CD8-positive, alpha-beta T cell (primary cell): ENCODE measurements at regions of chr9 and their contacts with region 1.

Region 1: DNA sequence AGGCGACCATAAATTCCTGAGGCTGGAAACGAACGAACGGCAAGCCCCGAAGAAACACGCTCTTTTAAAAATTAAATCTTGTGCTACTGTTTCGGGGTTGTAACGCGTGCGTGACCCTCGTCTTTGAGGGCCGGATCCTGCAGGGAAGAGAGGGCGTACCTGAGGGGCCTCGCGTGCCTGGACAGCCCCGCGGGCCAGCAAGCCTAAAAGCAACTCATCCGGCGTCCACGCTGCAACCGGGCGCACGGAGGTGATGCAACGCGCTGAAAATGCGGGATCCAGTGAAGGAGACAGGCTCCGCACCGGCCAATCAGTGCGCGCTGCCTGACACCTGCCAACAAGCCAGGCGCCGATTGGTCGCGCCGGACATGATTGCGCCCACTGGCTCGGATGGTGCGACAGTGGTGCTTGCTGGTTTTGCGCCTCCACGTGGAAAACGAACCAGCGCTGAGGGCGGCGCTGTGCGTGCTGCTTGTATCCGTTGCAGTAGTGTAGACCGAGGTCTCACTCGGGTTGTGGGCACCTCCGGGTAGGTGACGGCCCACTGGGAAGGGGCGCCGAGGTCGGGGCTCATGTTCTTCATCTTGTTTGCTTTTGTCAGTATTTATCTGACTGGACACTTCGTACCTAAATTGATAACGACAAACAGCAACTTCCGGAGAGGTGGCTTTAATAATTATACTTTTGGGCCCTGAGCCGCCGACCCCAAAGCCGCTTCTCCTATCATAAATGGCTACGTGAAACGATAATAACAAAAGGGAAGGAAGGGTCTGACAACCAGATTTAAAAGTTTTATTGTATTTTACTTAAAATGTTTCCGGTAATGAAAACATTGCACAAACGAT is at the start of gene IARS1:
- DNase-seq: peak; percentile 97 to 100 (median 100)
- ATAC-seq: peak; percentile 91
- H3K4me3 ChIP-seq: peak within 1 kb of the TSS; percentile 79 to 88
- H3K4me3 Mint-ChIP-seq: peak within 1 kb of the TSS; percentile 99
- H3K27ac ChIP-seq: peak within 1 kb of the TSS; percentile 78 to 90
- H3K27ac Mint-ChIP-seq: peak within 1 kb of the TSS; percentile 98
- H3K4me1 ChIP-seq: peaks cover 25% of the 10 kb centered on the region
- H3K4me1 Mint-ChIP-seq: peaks cover 46% of the 10 kb centered on the region
- H3K27me3 ChIP-seq: no peaks in the 10 kb centered on the region
- H3K27me3 Mint-ChIP-seq: no peaks in the 10 kb centered on the region
- CTCF ChIP-seq: peak; percentile 28
- total RNA-seq, gene IARS1: 64.2 to 66.2 TPM

Region 2: GRCh38 chr9:91378695-91379127 is 915.0 kb before region 1 on chr9:
- CTCF ChIA-PET with region 1: no interaction called
- POLR2A ChIA-PET with region 1: no interaction called
- intact Hi-C with region 1: no loop called
- DNase-seq: no peak
- ATAC-seq: no peak
- H3K4me3 ChIP-seq: no peak overlapping the region
- H3K4me3 Mint-ChIP-seq: no peak overlapping the region
- H3K27ac ChIP-seq: no peak overlapping the region
- H3K27ac Mint-ChIP-seq: no peak overlapping the region
- H3K4me1 ChIP-seq: no peaks in the 10 kb centered on the region
- H3K4me1 Mint-ChIP-seq: no peaks in the 10 kb centered on the region
- H3K27me3 ChIP-seq: no peaks in the 10 kb centered on the region
- H3K27me3 Mint-ChIP-seq: no peaks in the 10 kb centered on the region
- CTCF ChIP-seq: no peak

Region 3: GRCh38 chr9:92242260-92243136 is 51.2 kb before region 1 on chr9:
- CTCF ChIA-PET with region 1: no interaction called
- POLR2A ChIA-PET with region 1: no interaction called
- intact Hi-C with region 1: loop called in 1 of 2 experiments (anchors 10 kb)
- DNase-seq: no peak
- ATAC-seq: no peak
- H3K4me3 ChIP-seq: no peak overlapping the region
- H3K4me3 Mint-ChIP-seq: no peak overlapping the region
- H3K27ac ChIP-seq: no peak overlapping the region
- H3K27ac Mint-ChIP-seq: no peak overlapping the region
- H3K4me1 ChIP-seq: no peaks in the 10 kb centered on the region
- H3K4me1 Mint-ChIP-seq: no peaks in the 10 kb centered on the region
- H3K27me3 ChIP-seq: no peaks in the 10 kb centered on the region
- H3K27me3 Mint-ChIP-seq: no peaks in the 10 kb centered on the region
- CTCF ChIP-seq: no peak

Region 4: DNA sequence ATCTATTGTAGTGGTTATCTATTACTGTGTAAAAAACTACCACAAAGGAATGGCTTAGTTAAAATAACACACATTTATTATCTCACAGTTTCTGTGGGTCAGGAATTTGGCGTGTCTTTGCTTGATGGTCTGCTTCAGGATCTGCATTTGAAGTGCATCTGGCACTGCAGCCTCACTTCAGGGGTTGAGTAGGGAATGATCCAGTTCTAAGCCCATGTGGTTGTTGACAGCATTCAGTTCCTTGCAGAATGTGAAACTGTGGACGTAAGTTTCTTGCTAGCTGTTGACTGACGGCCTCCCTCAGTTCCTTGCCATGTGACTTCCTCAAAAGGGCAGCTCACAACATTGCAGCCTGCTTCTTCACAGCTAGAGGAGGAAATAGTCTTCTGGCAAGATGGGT is 112.8 kb after region 1 on chr9:
- CTCF ChIA-PET with region 1: no interaction called
- POLR2A ChIA-PET with region 1: no interaction called
- intact Hi-C with region 1: loop called in 1 of 2 experiments (anchors 5 kb)
- DNase-seq: peak in 8 of 9 experiments; percentile 14 to 72 (median 34)
- ATAC-seq: peak; percentile 90
- H3K4me3 ChIP-seq: peak overlapping the region; percentile 23 to 27
- H3K4me3 Mint-ChIP-seq: peak overlapping the region; percentile 72
- H3K27ac ChIP-seq: peak overlapping the region; percentile 2 to 57
- H3K27ac Mint-ChIP-seq: peak overlapping the region; percentile 85
- H3K4me1 ChIP-seq: peaks cover 24% of the 10 kb centered on the region
- H3K4me1 Mint-ChIP-seq: peaks cover 30% of the 10 kb centered on the region
- H3K27me3 ChIP-seq: no peaks in the 10 kb centered on the region
- H3K27me3 Mint-ChIP-seq: no peaks in the 10 kb centered on the region
- CTCF ChIP-seq: no peak

Region 5: DNA sequence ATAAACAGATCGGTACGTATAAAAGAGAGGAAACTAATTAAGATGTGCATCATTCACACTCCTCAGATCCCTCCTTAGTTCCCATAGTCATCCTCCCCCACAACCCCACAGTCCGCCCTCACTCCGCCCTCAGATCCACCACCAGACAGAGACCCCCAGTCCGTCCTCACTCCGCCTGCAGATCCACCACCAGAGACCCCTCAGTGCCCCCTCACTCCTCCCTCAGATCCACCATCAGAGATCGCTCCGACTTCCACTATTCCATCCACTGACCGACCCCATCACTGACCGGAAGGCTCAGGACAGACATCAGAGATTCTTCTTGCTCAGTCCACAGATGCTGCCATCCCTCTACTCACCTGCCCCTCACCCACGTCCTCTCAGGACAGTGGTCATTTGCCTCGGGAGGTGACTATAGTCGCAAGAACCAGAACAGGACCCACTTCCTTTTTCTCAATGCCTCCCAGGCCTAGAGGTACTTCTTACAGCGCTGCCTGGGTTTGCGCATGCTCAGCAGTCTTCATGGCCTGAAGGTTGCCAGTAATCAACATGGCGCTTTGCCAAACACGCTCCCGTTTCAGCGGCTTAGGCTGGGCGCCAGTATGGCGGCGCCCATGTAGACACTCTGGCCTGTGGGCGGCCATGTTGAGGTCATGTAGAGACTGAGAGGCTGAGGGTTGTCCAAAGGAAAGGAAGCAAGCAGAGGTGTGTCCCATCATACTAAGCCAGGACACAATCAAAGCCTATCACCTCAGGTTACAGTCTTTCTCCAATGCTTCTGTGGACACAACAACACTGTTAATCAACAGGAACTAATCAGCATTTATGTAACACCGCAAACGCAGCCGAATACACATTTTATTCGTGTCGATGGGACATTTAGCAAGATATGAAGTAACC is 584.1 kb after region 1 on chr9 and contains the start of gene ZNF484:
- CTCF ChIA-PET with region 1: no interaction called
- POLR2A ChIA-PET with region 1: no interaction called
- intact Hi-C with region 1: loop called in 1 of 2 experiments (anchors 10 kb)
- DNase-seq: peak; percentile 91 to 100 (median 98)
- ATAC-seq: peak; percentile 96
- H3K4me3 ChIP-seq: peak within 1 kb of the TSS; percentile 76 to 85
- H3K4me3 Mint-ChIP-seq: peak within 1 kb of the TSS; percentile 100
- H3K27ac ChIP-seq: peak within 1 kb of the TSS; percentile 81 to 90
- H3K27ac Mint-ChIP-seq: peak within 1 kb of the TSS; percentile 100
- H3K4me1 ChIP-seq: peaks cover 19% of the 10 kb centered on the region
- H3K4me1 Mint-ChIP-seq: peaks cover 48% of the 10 kb centered on the region
- H3K27me3 ChIP-seq: no peaks in the 10 kb centered on the region
- H3K27me3 Mint-ChIP-seq: no peaks in the 10 kb centered on the region
- CTCF ChIP-seq: no peak
- total RNA-seq, gene ZNF484: 18.4 to 18.7 TPM

Region 6: DNA sequence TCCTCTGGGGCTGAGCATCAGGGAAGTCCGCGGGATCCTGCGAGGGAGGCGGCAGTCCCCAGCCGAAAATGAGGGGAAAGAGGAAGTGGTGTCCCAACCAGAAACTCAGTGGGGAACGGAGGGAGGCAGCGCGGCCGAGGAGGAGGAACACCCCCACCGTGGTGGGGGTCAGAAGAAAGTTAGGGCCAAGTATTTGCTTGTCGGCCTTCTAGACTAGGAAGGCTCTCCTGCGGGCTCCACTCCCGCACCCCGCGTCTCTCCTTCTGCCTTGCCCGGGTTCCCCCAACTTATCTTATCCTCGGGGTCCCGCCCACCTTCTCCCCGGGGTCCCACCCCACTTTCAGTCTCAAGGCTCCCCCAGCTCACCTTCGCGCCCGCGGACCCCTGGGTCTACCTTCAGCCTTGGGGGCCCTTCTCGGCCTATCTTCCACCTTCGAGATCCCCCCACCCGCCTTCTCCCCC is 1282.2 kb after region 1 on chr9:
- CTCF ChIA-PET with region 1: no interaction called
- POLR2A ChIA-PET with region 1: no interaction called
- intact Hi-C with region 1: loop called in 1 of 2 experiments (anchors 10 kb)
- DNase-seq: peak; percentile 21 to 77 (median 68)
- ATAC-seq: peak; percentile 61
- H3K4me3 ChIP-seq: peak overlapping the region; percentile 69 to 85
- H3K4me3 Mint-ChIP-seq: peak overlapping the region; percentile 90
- H3K27ac ChIP-seq: peak overlapping the region; percentile 67 to 80
- H3K27ac Mint-ChIP-seq: peak overlapping the region; percentile 94
- H3K4me1 ChIP-seq: peaks cover 28% of the 10 kb centered on the region
- H3K4me1 Mint-ChIP-seq: peaks cover 44% of the 10 kb centered on the region
- H3K27me3 ChIP-seq: no peaks in the 10 kb centered on the region
- H3K27me3 Mint-ChIP-seq: no peaks in the 10 kb centered on the region
- CTCF ChIP-seq: no peak